OCI-LY7 (cell line): ENCODE measurements at regions of chr17 and their contacts with region 1.

Region 1: DNA sequence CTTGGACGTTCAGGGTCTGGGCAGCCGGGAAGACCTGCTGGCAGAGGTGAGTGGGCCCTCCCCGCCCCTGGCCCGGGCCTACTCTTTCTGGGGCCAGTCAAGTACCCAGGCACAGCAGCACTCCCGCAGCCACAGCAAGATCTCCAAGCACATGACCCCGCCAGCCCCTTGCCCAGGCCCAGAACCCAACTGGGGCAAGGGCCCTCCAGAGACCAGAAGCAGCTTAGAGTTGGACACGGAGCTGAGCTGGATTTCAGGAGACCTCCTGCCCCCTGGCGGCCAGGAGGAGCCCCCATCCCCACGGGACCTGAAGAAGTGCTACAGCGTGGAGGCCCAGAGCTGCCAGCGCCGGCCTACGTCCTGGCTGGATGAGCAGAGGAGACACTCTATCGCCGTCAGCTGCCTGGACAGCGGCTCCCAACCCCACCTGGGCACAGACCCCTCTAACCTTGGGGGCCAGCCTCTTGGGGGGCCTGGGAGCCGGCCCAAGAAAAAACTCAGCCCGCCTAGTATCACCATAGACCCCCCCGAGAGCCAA is 8.6 kb upstream of the ABCC3 start:
- DNase-seq: peak; percentile 76
- H3K4me3 ChIP-seq: no peak overlapping the region
- H3K27ac ChIP-seq: no peak overlapping the region
- H3K4me1 ChIP-seq: no peaks in the 10 kb centered on the region
- CTCF ChIP-seq: peak; percentile 82

Region 2: DNA sequence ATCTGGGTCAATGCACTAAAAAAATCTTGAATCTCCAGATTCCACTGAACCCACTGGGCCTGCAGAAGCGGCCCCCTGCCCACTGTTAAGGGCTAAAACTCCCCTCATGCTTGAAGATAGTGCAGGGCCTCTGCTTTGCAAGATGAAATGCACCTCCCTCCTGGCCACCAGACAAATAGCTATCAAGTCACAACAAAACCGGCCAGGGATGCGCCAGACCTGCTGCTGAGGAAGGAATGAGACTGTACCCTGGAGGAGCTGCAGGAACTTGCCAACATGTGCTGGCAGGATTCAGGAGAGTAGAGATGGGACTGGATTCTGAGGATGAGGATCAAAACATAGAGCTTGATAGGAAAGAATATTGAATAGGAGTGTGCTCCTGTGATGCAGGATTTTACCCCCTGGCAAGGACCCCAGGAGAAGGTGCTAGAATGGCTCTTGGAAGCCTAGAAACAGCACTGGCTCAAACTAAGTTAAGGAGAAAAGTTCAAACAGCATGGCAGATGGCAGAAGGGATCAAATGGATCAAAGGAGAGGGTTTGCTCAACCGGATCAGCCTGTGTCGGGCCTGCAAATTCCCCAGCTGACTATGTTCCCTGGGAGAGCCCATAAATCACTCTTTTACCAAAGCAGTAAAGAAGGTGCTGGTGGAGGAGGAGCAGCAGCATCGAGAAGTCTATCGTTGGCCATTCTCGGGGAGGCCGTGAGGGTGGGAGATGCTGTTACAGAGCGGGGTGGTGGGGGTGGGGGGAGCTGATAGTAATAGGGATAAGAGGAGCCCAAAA is 307.4 kb before region 1 on chr17:
- CTCF ChIA-PET with region 1: no interaction called
- POLR2A ChIA-PET with region 1: no interaction called
- intact Hi-C with region 1: no loop called
- DNase-seq: no peak
- H3K4me3 ChIP-seq: no peak overlapping the region
- H3K27ac ChIP-seq: no peak overlapping the region
- H3K4me1 ChIP-seq: no peaks in the 10 kb centered on the region
- CTCF ChIP-seq: no peak

Region 3: GRCh38 chr17:50541716-50542688 is 84.1 kb before region 1 on chr17:
- CTCF ChIA-PET with region 1: interaction called, 10 read pairs
- POLR2A ChIA-PET with region 1: no interaction called
- intact Hi-C with region 1: loop called (anchors 1 kb)
- DNase-seq: peak; percentile 82
- H3K4me3 ChIP-seq: peak overlapping the region; percentile 67
- H3K27ac ChIP-seq: no peak overlapping the region
- H3K4me1 ChIP-seq: peaks cover 12% of the 10 kb centered on the region
- CTCF ChIP-seq: peak; percentile 70

Region 4: DNA sequence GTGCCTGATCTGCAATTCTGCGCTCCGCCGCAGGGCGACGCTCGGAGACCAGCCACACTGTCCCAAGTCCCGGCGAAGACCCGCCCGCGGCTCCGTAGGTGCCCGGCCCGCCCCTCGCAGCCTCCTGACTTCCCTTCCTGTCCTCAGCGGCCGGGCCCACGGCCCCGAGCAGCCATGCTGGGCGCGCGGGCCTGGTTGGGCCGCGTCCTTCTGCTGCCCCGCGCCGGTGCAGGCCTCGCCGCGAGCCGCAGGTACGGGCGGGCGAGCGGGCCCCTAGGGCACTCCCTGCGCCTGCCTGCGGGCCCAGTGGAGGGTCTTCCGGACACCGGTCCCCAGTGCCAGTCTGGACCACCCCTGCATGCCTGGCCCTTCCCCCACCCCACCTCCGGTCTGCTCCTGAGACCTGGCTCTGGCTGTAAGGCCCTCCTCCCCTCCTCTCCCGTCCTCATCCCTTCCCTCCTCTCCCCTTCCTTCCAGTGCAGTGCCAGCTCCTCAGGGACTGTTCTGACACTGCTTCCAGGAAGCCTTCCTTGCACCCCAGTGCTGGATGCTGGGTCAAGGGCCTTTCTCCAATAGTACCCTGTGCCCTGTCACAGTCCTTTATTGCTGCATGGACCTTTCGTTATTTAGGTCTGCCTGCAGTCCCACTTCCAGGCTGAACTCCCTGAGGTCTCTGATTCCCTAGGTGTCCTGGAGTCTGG is 78.9 kb before region 1 on chr17 and contains the start of gene SPATA20:
- CTCF ChIA-PET with region 1: interaction called, 3 read pairs
- POLR2A ChIA-PET with region 1: no interaction called
- intact Hi-C with region 1: loop called (anchors 1 kb)
- DNase-seq: peak; percentile 86
- H3K4me3 ChIP-seq: peak within 1 kb of the TSS; percentile 41
- H3K27ac ChIP-seq: no peak within 1 kb of the TSS
- H3K4me1 ChIP-seq: peaks cover 13% of the 10 kb centered on the region
- CTCF ChIP-seq: peak; percentile 91
- total RNA-seq, gene SPATA20: 4.5 and 8.3 TPM in 2 replicates

Region 5: DNA sequence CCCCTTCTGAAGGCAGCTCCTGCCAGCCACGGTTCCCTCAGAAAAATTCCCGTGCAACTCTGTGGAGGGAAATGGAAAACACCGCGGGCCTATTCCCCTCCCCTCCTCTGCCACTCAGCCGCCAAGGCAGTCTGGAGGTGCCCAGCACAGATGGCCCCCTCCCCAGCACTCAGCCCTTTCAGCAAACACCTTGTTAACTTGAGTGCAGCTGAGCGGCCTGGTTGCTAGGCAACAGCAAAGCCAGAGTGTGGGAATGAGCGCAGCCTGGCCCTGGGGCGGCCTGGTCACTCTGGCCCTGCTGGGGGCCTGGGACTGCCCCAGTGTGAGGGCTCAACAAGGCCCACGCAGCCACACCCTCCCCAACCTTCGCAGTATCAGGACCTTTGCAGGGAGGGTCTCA is 32.8 kb before region 1 on chr17:
- CTCF ChIA-PET with region 1: no interaction called
- POLR2A ChIA-PET with region 1: no interaction called
- intact Hi-C with region 1: no loop called
- DNase-seq: no peak
- H3K4me3 ChIP-seq: no peak overlapping the region
- H3K27ac ChIP-seq: no peak overlapping the region
- H3K4me1 ChIP-seq: peaks cover 2% of the 10 kb centered on the region
- CTCF ChIP-seq: no peak

Region 6: DNA sequence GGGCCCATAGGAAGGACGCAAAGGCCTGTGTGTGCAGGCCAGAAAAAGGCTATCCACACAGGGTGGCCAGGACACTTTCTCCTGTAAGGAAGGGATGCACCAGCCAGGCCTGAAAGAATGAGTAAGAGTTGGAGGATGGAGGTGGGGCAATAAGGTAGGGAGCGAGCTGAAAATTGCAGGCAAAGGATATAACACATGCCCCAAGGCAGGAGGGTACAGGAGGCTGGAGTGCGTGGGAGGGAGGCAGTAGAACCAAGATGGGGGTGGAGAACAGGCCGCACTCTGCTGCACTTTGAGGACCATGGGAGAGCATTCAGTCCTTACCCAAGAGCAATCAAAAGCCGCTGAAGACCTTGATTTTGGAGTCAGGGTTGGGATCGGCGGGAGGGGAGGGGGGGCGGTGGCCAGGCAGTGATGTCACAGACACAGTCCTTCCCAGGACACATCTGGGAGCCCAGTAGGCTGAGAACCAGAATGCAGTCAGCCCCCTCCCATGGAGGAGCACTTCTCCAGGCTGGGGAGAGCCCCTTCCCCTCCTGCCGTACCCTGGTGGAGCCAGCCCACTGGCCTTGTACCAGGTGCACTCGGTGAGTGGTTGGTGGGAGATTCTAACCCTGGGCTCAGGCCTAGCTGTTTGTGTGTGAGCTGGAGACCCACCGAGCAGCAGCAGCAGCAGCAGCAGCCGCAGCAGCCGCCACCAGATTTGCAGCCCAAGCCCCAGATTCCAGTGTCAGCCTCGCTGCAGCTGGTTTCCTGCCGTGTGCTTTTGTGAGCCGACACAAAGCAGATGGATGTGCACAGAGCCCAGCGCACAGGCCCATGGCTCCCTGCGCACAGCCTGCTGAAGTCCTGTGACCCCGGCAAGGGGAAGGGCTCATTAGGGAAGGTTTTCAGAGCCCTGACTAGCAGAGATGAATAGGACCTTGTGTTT is 64.1 kb after region 1 on chr17:
- CTCF ChIA-PET with region 1: no interaction called
- POLR2A ChIA-PET with region 1: interaction called, 6 read pairs
- intact Hi-C with region 1: loop called (anchors 1 kb)
- DNase-seq: no peak
- H3K4me3 ChIP-seq: no peak overlapping the region
- H3K27ac ChIP-seq: no peak overlapping the region
- H3K4me1 ChIP-seq: no peaks in the 10 kb centered on the region
- CTCF ChIP-seq: no peak

Region 7: GRCh38 chr17:50841949-50842354 is 215.8 kb after region 1 on chr17:
- CTCF ChIA-PET with region 1: no interaction called
- POLR2A ChIA-PET with region 1: no interaction called
- intact Hi-C with region 1: loop called (anchors 5 kb)
- DNase-seq: peak; percentile 61
- H3K4me3 ChIP-seq: no peak overlapping the region
- H3K27ac ChIP-seq: no peak overlapping the region
- H3K4me1 ChIP-seq: no peaks in the 10 kb centered on the region
- CTCF ChIP-seq: peak; percentile 83

Region 8: DNA sequence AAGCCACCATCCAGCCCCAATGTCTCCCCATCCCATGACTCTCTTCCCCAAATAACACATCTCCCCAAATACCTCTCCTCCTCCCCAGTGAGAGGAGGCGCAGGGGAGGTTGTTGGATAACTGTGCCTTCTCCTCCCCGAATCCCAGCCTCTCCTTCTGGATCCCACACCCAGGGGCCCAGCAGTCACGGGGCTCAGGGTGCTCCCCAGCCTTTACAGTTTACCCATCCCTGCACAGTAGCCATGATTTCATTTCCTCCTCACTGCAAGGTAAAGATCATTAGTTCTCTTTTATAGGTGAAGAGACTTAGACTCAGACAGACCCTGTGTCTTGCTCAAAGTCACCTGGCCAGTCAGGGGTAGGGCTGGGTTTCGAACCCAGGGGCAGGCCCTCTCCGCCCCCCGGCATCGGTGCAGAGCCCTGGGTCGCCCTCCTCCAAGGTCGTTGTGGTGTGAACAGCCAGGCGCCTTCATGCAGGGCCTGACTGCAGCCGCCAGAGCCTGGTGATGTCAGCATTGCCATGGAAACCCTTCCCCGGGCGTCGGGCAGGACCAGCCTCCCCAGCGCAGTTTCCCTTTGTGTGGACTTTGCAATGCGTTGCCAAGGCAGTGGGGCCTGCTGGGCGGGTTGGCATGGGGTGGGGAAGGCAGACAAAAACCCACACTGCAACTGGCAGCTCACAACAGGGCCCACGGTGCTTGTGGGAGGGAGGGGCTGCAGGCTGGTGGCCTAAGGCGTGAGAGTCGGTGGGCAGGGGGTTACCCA is 293.4 kb after region 1 on chr17:
- CTCF ChIA-PET with region 1: no interaction called
- POLR2A ChIA-PET with region 1: no interaction called
- intact Hi-C with region 1: no loop called
- DNase-seq: peak; percentile 47
- H3K4me3 ChIP-seq: no peak overlapping the region
- H3K27ac ChIP-seq: no peak overlapping the region
- H3K4me1 ChIP-seq: peaks cover 29% of the 10 kb centered on the region
- CTCF ChIP-seq: no peak